CD4-positive, alpha-beta T cell (primary cell): ENCODE measurements at regions of chr1 and their contacts with region 1.

Region 1: DNA sequence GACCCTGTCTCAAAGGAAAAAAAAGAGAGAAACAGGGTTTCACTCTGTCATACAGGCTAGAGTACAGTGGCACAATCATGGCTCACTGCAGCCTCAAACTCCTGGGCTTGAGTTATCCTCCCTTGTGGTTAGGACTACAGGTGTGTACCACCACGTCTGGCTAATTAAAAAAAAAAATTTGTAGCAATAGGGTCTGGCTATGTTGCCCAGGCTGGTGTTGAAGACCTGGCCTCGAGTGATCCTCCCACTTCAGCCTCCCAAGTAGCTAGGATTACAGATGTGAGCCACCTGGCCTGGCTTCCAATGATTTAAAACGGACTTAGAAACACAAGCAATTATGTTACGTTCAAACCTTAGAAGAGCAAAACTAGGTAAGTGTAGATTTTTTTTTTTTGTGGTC is 22.1 kb downstream of the GOLPH3L start:
- DNase-seq: no peak
- ATAC-seq: no peak
- H3K4me3 ChIP-seq: no peak overlapping the region
- H3K4me3 Mint-ChIP-seq: no peak overlapping the region
- H3K27ac ChIP-seq: no peak overlapping the region
- H3K27ac Mint-ChIP-seq: no peak overlapping the region
- H3K4me1 ChIP-seq: no peaks in the 10 kb centered on the region
- H3K4me1 Mint-ChIP-seq: peaks cover 13% of the 10 kb centered on the region
- H3K27me3 ChIP-seq: no peaks in the 10 kb centered on the region
- H3K27me3 Mint-ChIP-seq: no peaks in the 10 kb centered on the region
- CTCF ChIP-seq: no peak

Region 2: DNA sequence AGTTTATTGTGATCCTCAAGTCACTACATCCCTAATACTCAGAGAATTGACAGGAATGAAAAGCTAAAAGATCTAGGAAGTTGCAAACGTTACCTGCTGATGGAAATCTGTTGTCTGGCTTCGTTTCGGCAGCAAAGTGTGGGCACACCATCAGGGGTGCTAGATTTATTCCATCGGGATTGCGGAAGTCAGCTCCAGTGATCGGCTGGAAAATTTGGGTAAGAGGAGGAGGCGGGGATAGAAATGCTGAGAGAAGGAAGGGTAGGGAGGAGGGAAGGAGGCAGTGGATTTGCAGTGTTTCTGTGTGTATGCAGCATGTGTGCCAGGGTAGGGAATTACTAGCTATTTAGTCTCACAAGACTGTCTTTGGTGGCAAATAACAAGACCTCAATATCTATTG is 133.2 kb after region 1 on chr1 and contains the start of gene CTSK:
- CTCF ChIA-PET with region 1: no interaction called
- POLR2A ChIA-PET with region 1: no interaction called
- intact Hi-C with region 1: loop called in 1 of 2 experiments (anchors 10 kb)
- DNase-seq: no peak
- ATAC-seq: no peak
- H3K4me3 ChIP-seq: no peak within 1 kb of the TSS
- H3K4me3 Mint-ChIP-seq: peak within 1 kb of the TSS; percentile 2
- H3K27ac ChIP-seq: no peak within 1 kb of the TSS
- H3K27ac Mint-ChIP-seq: no peak within 1 kb of the TSS
- H3K4me1 ChIP-seq: peaks cover 6% of the 10 kb centered on the region
- H3K4me1 Mint-ChIP-seq: peaks cover 23% of the 10 kb centered on the region
- H3K27me3 ChIP-seq: no peaks in the 10 kb centered on the region
- H3K27me3 Mint-ChIP-seq: no peaks in the 10 kb centered on the region
- CTCF ChIP-seq: no peak
- total RNA-seq, gene CTSK: 11.2 to 11.8 TPM

Region 3: DNA sequence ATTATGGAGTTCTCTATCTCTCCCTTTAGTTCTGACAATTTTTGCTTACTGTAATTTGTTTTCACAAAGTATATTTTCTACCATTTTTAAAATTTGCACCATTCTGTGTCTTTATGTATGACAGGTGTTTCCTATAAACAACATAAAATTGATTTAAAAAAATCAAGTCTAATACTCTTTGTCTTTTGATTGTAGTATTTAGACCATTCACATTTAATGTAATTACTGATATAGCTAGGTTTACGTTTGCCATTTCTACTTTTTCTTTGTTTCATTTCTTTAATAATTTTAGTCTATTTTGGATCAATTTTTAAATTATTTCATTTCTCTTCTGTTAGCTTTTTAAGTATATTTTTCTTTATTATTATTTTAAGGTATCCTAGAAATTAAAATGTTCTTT is 1791.3 kb after region 1 on chr1:
- CTCF ChIA-PET with region 1: no interaction called
- POLR2A ChIA-PET with region 1: no interaction called
- intact Hi-C with region 1: no loop called
- DNase-seq: no peak
- ATAC-seq: no peak
- H3K4me3 ChIP-seq: no peak overlapping the region
- H3K4me3 Mint-ChIP-seq: no peak overlapping the region
- H3K27ac ChIP-seq: no peak overlapping the region
- H3K27ac Mint-ChIP-seq: no peak overlapping the region
- H3K4me1 ChIP-seq: no peaks in the 10 kb centered on the region
- H3K4me1 Mint-ChIP-seq: peaks cover 4% of the 10 kb centered on the region
- H3K27me3 ChIP-seq: peaks cover 0 to 15% of the 10 kb centered on the region in 2 experiments
- H3K27me3 Mint-ChIP-seq: peaks cover 32% of the 10 kb centered on the region
- CTCF ChIP-seq: no peak